ENCODE measurements at regions of chr15 and their contacts with region 1.

Region 1: GRCh38 chr15:76311100-76311953 is at the start of gene ETFA:
- DNase-seq: peak; percentile 91
- ATAC-seq: peak; percentile 99
- H3K4me3 ChIP-seq: peak within 1 kb of the TSS; percentile 99
- H3K27ac ChIP-seq: peak within 1 kb of the TSS; percentile 75
- H3K4me1 ChIP-seq: peaks cover 3% of the 10 kb centered on the region; the same call in 1 of the 2 replicates
- H3K27me3 ChIP-seq: no peaks in the 10 kb centered on the region
- CTCF ChIP-seq: no peak
- EP300 ChIP-seq: no peak
- POLR2A ChIP-seq: peak; percentile 100
- RAD21 ChIP-seq: no peak
- polyA plus RNA-seq, gene ETFA: 114 to 124 TPM

Region 2: DNA sequence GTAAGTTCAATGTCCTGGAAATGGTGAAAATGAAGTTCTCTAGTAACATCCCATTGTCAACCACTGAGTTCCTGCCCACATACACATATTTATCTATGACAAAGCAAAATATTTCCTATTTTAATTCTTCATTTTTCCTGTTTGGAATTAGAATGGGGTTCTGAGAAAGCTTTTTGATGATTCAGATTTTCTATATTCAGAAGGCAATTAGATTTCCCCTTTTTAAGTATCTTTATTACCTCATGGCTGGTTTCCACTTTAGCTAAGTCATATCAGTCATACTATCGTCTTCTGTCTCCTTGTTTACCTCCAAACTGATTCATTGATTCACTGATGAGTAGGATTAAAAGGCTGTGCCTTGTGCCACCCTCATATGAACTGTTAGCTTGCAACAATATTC is 18.0 kb before region 1 on chr15:
- CTCF ChIA-PET with region 1: interaction called, 15 read pairs
- POLR2A ChIA-PET with region 1: interaction called, 9 read pairs
- RAD21 ChIA-PET with region 1: interaction called, 4 read pairs
- SMC1A ChIA-PET with region 1: interaction called, 12 read pairs
- in situ Hi-C with region 1: no loop called
- intact Hi-C with region 1: no loop called
- DNase-seq: no peak
- ATAC-seq: no peak
- H3K4me3 ChIP-seq: no peak overlapping the region
- H3K27ac ChIP-seq: no peak overlapping the region
- H3K4me1 ChIP-seq: no peaks in the 10 kb centered on the region
- H3K27me3 ChIP-seq: no peaks in the 10 kb centered on the region
- CTCF ChIP-seq: no peak
- EP300 ChIP-seq: no peak
- POLR2A ChIP-seq: no peak
- RAD21 ChIP-seq: no peak